Activated T-helper 1 cell treated with anti-CD3 and anti-CD28 coated beads, Interleukin-12 subunit alpha, Interleukin-12 subunit beta, Interleukin-2, Interleukin-4 antibody, amounts not matched to agents 30 ng/mL and 10 ng/mL and 1 ng/mL, durations not matched to agents 14 hours and 24 hours and 36 hours (primary cell): ENCODE measurements at regions of chr9 and their contacts with region 1.

Region 1: GRCh38 chr9:35116898-35117551 is 1.4 kb upstream of the ATOSB start:
- DNase-seq: peak; percentile 83
- H3K4me3 Mint-ChIP-seq: peak overlapping the region; percentile 94
- H3K27ac Mint-ChIP-seq: peak overlapping the region; percentile 93
- H3K4me1 Mint-ChIP-seq: peaks cover 45% of the 10 kb centered on the region
- H3K27me3 Mint-ChIP-seq: peaks cover 4% of the 10 kb centered on the region

Region 2: DNA sequence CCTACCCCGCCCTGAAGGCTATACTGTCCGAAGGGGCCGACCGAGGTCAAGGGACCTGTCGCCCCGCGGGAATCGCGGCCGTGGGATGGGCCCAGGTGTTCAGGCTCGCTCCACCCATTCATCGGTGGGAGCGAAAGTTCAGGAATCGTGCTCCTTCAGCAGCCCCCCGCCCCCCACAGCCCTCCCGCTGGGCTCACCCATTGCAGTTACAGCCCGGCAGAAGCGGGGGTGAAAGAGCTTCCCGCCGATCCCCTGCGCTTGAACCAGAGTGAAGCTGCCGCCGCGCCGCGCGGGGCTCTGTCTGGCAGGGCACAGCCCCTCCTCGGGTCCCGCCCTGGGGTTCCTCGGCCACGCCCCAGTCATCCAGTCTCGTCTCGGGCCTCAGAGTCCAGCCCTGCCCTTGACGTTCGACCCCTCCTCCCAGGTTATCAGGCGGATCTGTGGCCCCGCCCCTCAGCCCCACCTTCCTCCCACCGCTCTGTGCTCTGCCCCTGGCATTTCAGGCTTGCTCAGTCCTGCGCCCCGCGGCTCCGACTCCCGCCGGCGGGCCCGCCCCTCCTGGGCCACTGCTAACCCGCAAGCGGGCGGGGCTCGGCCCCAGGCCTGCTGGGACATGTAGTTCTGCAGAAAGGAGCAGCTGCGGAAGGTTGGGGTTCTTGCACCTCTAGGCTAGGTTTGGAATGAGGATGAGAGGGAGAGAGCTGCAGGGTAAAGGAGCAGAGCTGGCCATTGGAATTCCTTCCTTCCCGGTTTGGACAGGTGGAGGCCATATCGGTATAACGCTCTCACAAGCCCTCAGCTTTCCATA is 740.2 kb before region 1 on chr9 and contains the start of gene MYORG:
- intact Hi-C with region 1: loop called (anchors 2 kb)
- DNase-seq: peak; percentile 97
- H3K4me3 Mint-ChIP-seq: peak within 1 kb of the TSS; percentile 88
- H3K27ac Mint-ChIP-seq: peak within 1 kb of the TSS; percentile 32
- H3K4me1 Mint-ChIP-seq: peaks cover 45% of the 10 kb centered on the region
- H3K27me3 Mint-ChIP-seq: peaks cover 13% of the 10 kb centered on the region
- total RNA-seq, gene MYORG: 1.0 and 1.9 TPM in 2 replicates

Region 3: DNA sequence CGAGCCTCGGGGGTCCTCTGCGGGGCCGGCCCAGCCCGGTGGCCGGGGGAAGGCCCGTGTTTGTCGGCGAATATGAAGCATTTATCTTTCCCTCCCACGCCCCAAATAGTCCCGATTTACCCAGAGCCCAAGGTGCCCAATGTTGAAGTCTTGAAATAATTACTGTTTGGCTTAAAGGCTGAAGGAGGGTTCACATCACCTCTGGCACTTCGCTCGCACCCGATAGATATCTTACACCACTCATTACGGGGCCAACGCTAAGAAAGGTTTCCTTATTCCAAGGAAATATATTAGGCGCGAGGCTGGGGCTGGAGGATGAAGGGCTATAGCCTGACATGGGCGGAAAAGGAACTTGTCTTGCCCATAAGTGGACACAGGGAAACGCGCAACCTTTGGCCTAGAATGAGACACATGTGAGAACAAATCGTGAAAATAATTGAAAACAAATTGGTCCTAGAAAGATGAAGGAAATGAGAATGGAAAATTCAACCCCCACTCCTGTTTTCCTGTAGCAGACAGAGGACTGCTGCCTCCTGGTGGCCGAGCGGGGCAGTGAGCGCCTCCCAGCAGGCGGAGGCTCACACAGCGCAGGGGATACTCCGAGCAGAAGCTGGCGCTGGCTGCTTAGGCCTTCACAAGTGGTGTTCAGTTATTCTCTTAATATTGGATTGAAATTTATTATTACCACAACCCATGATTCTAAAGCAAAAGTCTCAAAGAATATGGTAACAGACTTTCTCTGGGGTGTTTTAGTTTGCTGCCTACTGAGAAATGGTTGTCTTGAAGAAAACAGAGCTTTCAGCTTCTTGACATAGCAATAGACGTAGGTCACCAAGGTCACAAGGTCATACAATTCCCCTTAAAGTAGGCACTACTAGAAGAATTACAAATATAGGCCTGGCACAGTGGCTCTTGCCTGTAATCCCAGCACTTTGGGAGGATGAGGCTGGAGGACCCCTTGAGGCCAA is 415.0 kb before region 1 on chr9:
- intact Hi-C with region 1: loop called (anchors 5 kb)
- DNase-seq: peak; percentile 66
- H3K4me3 Mint-ChIP-seq: peak overlapping the region; percentile 82
- H3K27ac Mint-ChIP-seq: peak overlapping the region; percentile 68
- H3K4me1 Mint-ChIP-seq: peaks cover 6% of the 10 kb centered on the region
- H3K27me3 Mint-ChIP-seq: peaks cover 29% of the 10 kb centered on the region

Region 4: DNA sequence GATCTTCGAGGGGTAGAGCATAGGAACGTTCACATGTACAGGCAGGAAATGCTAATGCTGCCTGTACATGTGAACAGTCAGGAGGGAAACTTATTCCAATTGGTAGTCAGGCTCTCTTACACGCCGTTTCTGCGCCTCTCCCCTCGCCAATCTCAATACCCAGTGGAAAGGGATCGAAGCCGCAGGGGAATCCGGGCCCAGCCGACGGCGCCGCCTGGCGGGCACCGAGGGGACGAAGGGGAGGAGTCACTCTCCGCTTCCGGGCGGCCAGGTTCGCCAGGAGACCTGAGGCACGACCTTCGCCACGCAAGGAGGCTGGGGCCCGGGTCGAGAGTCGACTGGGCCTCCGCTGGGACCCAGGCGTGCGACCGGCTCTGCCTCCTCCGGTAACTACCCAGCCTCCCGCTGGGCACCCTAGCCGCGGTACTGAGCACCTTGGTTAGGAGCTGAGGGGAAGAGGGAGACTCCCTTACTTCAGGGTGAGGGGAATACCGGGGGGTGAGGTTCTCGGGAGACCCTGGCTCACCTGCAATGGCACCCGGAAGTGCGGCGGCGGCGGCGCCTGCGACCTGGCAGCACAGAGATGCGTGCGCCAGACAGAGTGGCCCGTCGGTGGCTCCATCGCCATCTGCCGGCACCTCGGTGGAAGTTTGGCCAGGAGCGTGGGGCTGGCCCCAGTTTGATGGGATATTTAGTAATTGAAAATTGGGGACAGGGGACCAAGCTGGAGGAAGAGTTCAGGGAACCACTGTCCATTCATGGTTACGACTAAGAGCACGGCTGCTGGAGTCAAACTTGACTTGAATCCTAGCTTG is 20.8 kb before region 1 on chr9 and contains the start of gene PIGO:
- intact Hi-C with region 1: loop called (anchors 1 kb)
- DNase-seq: peak; percentile 85
- H3K4me3 Mint-ChIP-seq: peak within 1 kb of the TSS; percentile 85
- H3K27ac Mint-ChIP-seq: peak within 1 kb of the TSS; percentile 90
- H3K4me1 Mint-ChIP-seq: peaks cover 33% of the 10 kb centered on the region
- H3K27me3 Mint-ChIP-seq: no peaks in the 10 kb centered on the region
- total RNA-seq, gene PIGO: 34.4 and 39.7 TPM in 2 replicates

Region 5: DNA sequence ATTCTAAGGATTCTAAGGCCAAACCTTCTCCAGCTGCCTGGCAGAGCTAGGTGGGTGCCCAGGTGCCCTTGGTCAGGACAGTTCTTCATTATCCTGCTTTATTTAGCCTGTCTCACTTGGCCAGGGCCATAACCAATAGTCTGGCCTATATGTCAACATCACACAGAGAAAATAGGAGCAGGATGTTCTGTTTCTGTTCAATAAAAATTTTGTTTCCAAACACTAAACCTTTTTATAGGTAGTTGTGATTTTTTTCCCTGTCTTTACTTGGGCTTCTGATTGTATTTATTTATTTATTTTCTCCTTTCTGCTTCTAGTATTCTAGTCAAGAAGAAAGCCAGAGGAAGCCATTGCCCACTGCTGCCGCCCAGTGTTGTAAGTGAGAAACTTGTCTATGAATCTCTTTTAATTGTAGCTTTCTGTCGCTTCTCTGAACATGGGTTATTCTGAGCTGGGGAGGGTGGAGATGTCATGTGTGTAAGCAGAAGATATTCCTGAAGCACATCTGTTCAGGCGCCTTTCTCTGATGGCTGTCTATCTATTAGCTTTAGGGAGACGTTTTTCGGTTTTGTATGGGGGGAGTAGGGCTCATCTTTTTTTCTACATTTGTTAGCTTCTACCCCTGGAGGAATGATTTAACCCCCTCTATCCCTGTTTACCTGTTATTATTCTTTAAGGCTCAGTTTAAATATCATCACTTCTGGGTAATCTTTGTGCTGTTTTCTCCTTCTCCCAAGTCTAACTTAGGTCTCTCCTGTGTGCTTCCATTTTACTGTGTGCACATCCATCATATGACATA is 141.8 kb after region 1 on chr9:
- intact Hi-C with region 1: loop called (anchors 1 kb)
- DNase-seq: no peak
- H3K4me3 Mint-ChIP-seq: no peak overlapping the region
- H3K27ac Mint-ChIP-seq: no peak overlapping the region
- H3K4me1 Mint-ChIP-seq: peaks cover 5% of the 10 kb centered on the region
- H3K27me3 Mint-ChIP-seq: peaks cover 2% of the 10 kb centered on the region

Region 6: DNA sequence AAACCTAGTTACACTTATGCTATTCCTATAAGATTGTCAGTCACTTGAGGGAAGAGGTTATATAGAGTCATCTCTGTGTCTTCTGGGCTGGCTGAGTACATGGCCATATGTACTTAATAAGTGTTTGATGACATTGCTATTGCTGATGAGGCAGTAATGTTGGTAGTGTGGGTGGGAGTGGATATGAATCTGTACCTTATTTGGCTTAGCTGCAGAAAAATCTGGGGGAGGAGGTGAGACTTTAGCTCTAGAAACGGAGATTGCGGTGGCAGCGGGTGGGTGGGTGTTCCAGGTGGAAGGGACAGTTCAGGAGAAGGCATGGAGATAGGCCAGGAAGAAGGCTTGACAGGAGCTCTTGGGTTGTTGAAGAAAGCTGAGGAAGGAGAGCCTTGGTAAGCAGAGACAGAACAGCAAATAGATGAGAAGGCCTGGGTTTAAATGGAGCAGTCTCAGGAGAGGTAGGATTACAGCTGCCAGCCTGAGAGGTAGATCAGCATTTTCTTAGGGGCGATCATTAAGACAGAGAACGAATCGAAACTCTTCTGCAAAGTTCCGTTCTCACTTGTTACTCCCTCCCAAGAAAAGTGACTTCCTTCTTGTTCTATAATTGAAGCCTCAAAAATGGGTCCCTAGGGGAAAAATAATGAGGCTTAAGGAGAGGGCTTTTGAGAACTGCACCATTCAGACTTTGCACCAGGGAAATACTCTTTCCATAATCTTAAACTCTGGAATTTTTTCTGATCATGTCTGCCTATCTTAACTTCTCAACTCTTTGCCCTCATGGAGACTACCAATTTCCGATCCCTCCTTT is 205.3 kb after region 1 on chr9:
- intact Hi-C with region 1: no loop called
- DNase-seq: no peak
- H3K4me3 Mint-ChIP-seq: no peak overlapping the region
- H3K27ac Mint-ChIP-seq: no peak overlapping the region
- H3K4me1 Mint-ChIP-seq: no peaks in the 10 kb centered on the region
- H3K27me3 Mint-ChIP-seq: peaks cover 2% of the 10 kb centered on the region

Region 7: DNA sequence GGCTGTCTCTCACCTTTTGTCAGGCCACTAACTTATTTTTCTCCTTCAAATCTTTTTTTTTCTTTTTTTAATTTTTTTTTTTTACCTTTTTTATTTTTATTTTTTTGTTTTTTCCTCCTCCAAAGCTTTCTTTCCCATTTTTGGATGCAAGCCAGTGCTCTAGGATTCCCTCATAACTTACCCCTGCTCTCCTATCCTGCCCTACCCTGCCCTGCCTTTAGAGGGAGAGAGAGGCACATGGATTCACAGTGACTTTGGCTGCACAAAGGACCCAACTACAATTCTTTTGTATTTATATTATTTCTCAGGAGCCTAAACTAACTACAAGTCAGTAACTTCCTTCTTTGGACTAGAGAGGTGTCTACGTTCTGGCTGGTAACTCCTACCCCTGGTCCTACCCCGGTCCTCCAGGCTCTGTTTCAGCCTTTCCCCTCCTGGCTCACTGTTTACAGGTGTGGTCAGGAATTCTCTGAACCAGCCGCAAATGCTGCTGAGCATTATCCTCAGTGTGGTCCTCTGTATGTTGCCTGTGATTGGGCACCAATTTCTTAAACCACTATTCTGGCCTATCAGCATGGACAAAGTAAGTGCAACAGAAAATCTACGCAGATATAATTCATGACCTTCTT is 364.4 kb after region 1 on chr9:
- intact Hi-C with region 1: loop called (anchors 1 kb)
- DNase-seq: peak; percentile 12
- H3K4me3 Mint-ChIP-seq: no peak overlapping the region
- H3K27ac Mint-ChIP-seq: no peak overlapping the region
- H3K4me1 Mint-ChIP-seq: no peaks in the 10 kb centered on the region
- H3K27me3 Mint-ChIP-seq: peaks cover 7% of the 10 kb centered on the region

Region 8: DNA sequence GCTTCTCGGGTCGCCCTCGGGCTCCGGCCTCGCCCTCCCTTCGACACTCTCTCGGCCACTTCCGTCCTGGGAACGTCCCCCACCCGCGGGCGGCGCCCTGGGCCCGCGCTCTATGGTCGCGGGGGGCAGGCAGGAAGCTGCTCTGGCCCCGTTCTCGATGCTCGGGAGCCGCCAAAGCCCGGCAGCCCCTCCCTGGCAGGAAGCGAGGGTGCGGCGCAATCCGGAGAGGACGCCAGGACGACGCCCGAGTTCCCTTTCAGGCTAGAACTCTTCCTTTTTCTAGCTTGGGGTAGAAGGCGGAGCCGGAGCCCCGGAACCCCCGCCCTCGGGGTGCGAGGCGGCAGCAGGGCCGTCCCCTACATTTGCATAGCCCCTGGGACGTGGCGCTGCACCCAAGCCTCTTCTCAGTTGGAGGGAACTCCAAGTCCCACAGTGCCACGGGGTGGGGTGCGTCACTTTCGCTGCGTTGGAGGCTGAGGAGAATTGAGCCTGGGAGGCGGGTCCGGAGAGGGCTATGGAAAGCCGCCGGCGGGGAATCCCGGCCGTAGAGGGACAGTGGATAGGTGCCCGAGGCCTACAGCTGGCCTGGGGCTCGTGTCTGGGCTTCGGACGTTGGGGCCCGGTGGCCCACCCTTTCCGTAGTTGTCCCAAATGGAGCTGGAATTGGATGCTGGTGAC is 615.2 kb after region 1 on chr9 and contains the starts of genes CREB3 and TLN1:
- intact Hi-C with region 1: loop called (anchors 1 kb)
- DNase-seq: peak; percentile 98
- H3K4me3 Mint-ChIP-seq: no peak within 1 kb of the TSS
- H3K27ac Mint-ChIP-seq: peak within 1 kb of the TSS; percentile 92
- H3K4me1 Mint-ChIP-seq: peaks cover 22% of the 10 kb centered on the region
- H3K27me3 Mint-ChIP-seq: no peaks in the 10 kb centered on the region
- total RNA-seq, gene CREB3: 32.1 and 32.6 TPM in 2 replicates
- total RNA-seq, gene TLN1: 229 and 230 TPM in 2 replicates